ENCODE measurements at regions of chr5 and their contacts with region 1.

Region 1: DNA sequence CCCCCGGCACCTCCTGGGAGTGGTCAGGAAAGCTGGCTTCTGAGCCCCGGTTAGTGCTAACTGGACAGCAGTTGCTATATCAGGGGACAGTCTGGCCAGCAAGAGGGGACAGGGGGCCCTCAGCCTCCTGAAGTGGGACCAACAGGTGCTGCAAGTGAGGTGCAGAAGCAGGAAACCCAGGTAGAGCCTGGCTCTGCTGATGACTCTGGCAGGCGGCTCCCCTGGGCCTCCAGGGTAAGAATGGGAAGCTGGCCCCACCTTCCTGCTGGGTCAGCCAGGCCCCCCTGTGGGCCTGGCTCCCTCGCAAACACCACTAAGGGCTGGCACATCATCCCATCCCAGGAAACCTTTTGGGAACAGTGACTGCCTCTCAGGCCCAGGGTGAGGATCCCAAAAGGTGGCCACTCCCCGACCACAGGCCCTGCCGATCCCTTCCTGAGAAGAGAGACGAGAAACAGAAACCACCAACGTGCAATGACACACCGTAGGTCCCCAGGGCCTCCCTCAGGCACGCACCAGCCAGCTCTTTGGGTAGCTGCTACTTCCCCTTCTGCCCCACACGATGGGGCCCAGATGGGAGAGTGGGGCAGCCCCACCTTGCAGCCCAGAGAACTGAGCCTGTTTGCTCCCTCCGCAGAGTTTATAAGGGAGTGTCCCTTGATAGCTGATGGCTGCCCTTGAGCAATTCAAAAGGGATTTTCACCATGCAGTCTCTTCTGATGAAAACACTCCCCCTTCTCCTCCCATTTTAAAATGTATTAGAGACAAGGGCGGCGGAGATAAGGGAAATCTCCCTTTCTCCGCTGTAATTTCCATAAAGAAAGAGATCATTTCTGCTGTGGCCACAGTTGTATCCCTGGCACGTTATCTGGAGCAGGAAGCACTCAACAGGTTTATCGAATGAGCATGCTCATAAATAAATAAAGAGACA is 76.8 kb downstream of the STK10 start:
- DNase-seq: peak; percentile 86
- CTCF ChIP-seq: no peak

Region 2: DNA sequence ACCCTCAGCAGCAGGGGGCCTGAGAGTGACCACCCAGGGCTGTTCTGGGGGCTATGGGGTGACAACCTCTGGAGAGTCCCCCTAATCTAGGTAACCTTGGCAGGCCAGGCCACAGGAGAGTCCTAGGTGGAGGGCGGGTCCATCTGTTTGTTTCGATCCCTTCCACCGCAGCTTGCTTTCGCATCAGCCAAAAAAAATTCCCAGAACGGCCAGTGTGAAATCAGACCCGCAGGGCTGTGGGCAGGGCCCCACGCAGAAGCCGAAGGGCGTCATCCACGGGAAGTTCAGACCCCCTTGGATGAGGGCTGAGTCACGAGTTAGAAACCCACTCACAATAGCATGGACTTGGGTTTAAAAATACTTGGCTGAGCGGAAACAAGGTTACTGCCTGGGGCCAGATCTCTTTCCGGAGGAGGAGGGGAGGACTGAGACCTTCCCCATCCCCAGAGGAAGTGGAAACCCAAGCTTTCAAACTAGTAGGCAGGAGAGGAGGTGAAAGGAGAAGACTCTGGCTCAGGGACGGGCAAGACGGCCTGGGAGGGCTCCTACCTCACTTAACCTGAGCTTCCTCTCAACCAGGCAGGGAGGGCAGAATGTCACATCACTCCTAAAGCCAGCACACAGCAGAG is 68.3 kb after region 1 on chr5:
- in situ Hi-C with region 1: loop called (anchors 5 kb)
- DNase-seq: peak; percentile 68
- CTCF ChIP-seq: no peak

Region 3: DNA sequence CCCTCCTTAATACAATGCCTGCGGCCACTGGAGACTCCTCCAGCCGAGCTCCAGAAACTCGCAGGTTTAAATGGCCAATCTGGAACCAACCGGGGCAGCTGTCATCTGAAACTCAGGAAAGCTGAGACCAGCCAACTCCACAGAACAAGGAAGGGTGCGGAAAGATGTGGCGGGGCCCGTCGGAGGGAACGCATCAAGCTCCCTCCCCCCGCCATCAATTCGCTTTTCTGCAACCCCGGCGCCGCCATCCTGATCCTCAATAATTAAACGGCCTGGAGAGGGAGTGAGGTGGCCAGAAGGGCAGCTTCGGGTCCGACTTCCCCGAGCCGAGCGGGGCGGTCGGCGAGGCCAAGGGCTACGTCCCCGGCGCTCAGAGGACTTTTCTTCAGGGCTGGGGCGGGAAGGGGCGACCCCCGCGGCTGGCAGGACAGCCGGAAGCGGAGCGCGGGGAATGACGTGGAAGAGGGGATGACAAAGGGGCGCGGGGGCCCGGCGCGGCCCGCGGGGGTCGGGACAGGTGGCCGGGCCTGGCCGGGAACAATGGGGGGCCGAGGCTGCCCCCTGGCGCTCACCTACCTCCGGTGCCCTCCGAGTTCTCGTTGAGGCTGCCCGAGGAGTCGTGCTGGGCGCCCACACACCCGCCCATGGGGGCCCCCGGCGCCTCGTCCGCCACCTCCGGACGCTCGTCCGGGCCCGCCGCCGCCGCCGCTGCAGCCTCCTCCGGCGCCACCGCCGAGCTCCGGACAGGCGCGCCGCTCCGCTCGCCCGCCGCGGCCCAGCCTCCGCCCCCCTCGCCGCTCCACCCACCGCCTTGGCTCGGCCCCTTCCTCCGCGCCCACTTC is 172.1 kb after region 1 on chr5 and contains the start of gene UBTD2:
- in situ Hi-C with region 1: loop called (anchors 10 kb)
- DNase-seq: peak; percentile 91
- CTCF ChIP-seq: peak; percentile 71

Region 4: GRCh38 chr5:172294831-172295230 is 183.6 kb after region 1 on chr5:
- in situ Hi-C with region 1: no loop called
- DNase-seq: no peak
- CTCF ChIP-seq: no peak

Region 5: GRCh38 chr5:172770675-172771438 is 659.7 kb after region 1 on chr5 and contains the start of gene DUSP1:
- in situ Hi-C with region 1: no loop called
- DNase-seq: peak; percentile 98
- CTCF ChIP-seq: peak; percentile 82

Region 6: DNA sequence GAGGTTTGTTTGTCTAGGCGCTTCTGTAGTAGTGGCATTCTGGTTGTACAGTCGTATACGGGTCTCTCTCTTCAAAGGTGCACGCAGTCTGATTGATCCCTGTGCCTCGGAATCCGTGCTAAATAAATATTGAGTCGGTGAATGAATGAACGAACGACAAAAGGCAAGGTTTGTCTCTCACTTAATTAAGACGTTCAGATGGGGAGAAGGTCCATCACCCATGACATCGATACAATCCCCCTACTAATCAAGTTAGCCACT is 944.5 kb after region 1 on chr5:
- in situ Hi-C with region 1: no loop called
- DNase-seq: no peak
- CTCF ChIP-seq: no peak